Prostate gland (tissue), 2 donors: ENCODE measurements at regions of chr20 and their contacts with region 1.

Region 1: DNA sequence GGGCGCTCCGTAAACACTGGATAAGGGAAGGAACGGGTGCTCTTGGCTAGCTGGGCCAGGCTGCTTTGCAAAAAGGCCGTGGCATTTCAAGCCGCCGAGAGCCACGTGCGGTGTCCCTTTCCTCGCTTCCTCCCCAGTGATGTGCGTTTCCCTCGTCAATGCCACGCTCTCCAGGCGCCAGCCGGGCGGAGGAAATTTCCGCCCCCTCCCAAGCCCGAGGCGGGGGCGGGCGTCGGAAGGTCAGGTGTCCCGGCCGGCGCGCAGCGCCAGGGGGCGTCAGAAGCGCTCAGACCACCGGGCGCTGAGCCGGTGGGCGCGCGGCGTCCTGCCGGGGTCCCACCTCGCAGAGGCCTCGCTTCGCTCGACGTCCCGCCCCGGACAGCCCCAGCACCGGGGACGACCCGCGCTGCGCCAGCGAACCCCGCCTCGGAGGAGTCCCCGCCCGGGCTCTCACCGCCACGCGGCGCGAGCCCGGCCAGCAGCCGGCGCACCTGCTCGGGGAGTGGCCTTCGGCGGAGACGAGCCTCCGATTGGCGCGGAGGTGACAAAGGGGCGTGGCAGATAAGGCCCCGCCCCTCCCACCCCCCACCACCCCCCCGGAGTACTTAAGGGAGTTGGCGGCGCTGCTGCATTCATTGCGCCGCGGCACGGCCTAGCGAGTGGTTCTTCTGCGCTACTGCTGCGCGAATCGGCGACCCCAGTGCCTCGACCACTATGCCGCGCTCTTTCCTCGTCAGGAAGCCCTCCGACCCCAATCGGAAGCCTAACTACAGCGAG is at the start of gene SNAI1:
- DNase-seq: peak; percentile 78
- H3K4me3 ChIP-seq: peak within 1 kb of the TSS; percentile 31 to 36
- H3K27ac ChIP-seq: peak within 1 kb of the TSS; percentile 33 to 57
- H3K4me1 ChIP-seq: peaks cover 8% of the 10 kb centered on the region
- H3K27me3 ChIP-seq: no peaks in the 10 kb centered on the region
- CTCF ChIP-seq: peak; percentile 45 to 68 (median 57)
- POLR2A ChIP-seq: peak; percentile 52
- total RNA-seq, gene SNAI1: 1.0 to 7.4 TPM

Region 2: GRCh38 chr20:49888345-49888966 is 94.1 kb before region 1 on chr20:
- intact Hi-C with region 1: no loop called
- DNase-seq: peak; percentile 41
- H3K4me3 ChIP-seq: no peak overlapping the region
- H3K27ac ChIP-seq: peak overlapping the region; percentile 39 to 88
- H3K4me1 ChIP-seq: peaks cover 14% of the 10 kb centered on the region
- H3K27me3 ChIP-seq: no peaks in the 10 kb centered on the region
- CTCF ChIP-seq: peak; percentile 67 to 87 (median 78)
- POLR2A ChIP-seq: no peak

Region 3: GRCh38 chr20:50070991-50071888 is 88.7 kb after region 1 on chr20:
- intact Hi-C with region 1: loop called (anchors 1 kb)
- DNase-seq: peak; percentile 84
- H3K4me3 ChIP-seq: peak overlapping the region; percentile 14 to 30
- H3K27ac ChIP-seq: no peak overlapping the region
- H3K4me1 ChIP-seq: no peaks in the 10 kb centered on the region
- H3K27me3 ChIP-seq: no peaks in the 10 kb centered on the region
- CTCF ChIP-seq: peak; percentile 99 to 100 (median 100)
- POLR2A ChIP-seq: peak; percentile 14

Region 4: GRCh38 chr20:50179507-50180016 is 197.0 kb after region 1 on chr20:
- intact Hi-C with region 1: loop called (anchors 5 kb)
- DNase-seq: no peak
- H3K4me3 ChIP-seq: no peak overlapping the region
- H3K27ac ChIP-seq: no peak overlapping the region
- H3K4me1 ChIP-seq: no peaks in the 10 kb centered on the region
- H3K27me3 ChIP-seq: no peaks in the 10 kb centered on the region
- CTCF ChIP-seq: no peak
- POLR2A ChIP-seq: no peak